AG04450 (cell line): ENCODE measurements at regions of chr5 and their contacts with region 1.

Region 1: DNA sequence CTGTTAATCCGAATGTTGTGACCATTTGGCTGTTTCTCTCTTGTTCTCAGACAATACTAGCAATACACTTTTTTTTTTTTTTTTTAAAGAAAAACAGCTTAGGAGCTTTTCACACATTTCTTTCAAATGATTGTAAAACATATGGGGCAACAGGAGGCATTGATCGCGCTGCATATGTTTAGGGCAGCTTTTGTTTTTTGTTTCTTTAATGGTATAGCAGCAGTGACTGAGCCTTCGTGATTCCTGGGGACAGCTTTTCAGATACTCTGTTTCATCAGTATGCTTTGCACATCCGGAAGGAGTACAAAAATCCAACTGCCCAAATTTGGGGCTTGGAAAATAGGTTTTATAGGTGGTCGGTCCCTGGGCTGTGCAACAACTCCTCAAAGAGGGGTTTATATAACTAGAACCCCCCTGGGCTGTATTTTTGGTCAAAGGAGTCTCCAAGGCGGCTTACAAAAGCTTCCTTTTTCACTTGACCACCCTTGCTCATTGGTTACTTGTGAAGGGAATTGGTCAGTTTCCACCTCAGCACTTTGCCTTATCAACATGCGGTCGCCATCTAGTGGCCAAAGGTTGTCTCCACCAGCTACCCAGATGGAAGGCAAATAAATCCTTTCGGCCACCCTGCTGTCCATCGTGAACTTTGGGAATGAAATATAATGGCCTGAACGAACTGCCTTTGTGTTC is 91.8 kb downstream of the PDE6A start:
- DNase-seq: peak; percentile 46
- H3K4me3 ChIP-seq: no peak overlapping the region
- H3K27ac ChIP-seq: no peak overlapping the region
- H3K27me3 ChIP-seq: peaks cover 19% of the 10 kb centered on the region
- CTCF ChIP-seq: peak; percentile 95

Region 2: DNA sequence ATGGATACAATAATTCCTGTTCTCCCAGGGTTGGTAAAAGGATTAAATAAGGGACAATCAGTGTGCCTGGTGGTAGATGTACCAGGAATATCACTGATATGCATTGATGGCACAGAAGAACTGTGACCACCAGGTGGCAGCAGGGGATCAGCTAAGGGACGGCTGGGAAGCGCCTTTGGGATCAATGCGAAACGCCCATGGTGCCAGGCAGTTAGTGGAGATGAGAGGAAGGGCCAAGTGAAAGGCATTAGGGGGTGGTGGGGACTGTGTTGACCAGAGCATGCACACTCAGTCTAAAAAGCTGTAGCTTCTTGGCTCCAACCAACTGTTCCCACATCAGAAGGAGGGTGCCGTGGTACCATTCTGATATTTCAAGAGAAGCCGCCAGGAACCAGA is 215.9 kb before region 1 on chr5:
- CTCF ChIA-PET with region 1: interaction called, 18 read pairs
- POLR2A ChIA-PET with region 1: no interaction called
- DNase-seq: peak; percentile 48
- H3K4me3 ChIP-seq: no peak overlapping the region
- H3K27ac ChIP-seq: no peak overlapping the region
- H3K27me3 ChIP-seq: no peaks in the 10 kb centered on the region
- CTCF ChIP-seq: peak; percentile 86

Region 3: GRCh38 chr5:149872351-149873040 is 19.7 kb after region 1 on chr5:
- CTCF ChIA-PET with region 1: interaction called, 66 read pairs
- POLR2A ChIA-PET with region 1: no interaction called
- DNase-seq: no peak
- H3K4me3 ChIP-seq: no peak overlapping the region
- H3K27ac ChIP-seq: no peak overlapping the region
- H3K27me3 ChIP-seq: peaks cover 41% of the 10 kb centered on the region
- CTCF ChIP-seq: no peak

Region 4: DNA sequence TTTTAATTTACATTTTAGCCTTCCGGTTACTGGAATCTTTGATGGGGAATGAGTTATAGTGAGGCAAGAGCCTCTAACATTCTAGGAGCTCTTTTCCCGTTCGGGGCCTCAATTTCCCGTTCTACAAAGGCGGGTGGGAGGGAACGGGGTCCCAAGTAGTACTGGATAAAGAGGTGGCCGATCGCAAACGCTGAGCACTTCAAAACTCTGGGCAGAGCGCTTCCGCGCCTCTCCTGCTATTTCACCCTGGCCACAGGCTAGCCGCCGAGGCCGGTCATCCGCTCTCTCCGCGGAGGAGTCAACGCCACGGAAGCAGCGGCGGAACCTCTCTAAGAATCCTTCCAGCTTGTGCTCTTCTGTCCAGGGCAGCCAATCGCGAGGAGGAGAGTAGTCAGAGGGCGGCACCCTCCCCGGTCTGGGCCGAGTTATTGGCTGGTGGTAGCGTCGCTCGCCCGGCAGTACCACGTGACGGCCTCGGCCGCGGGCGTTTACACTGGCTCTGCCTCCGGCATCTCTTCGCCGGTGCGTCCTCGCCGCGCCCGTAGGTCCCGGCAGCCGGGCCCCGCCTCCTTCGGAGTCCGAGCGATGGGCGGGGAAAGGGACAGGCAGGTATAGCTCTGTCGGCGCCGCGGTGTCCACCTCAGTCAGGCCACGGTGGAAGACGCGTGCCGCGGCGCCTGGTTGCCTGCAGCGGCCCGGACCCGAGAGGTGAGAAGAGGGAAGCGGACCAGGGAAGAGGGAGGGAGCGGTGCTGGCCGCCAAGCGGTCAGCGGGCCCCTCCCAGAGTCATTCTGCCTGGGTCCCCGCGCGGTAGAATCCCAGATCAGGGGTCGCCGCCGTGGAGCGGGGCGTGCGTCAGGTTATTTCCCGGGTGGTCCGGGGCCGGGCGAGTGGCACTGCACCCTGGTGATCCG is 107.7 kb after region 1 on chr5 and contains the start of gene SLC26A2:
- CTCF ChIA-PET with region 1: interaction called, 131 read pairs
- POLR2A ChIA-PET with region 1: interaction called, 3 read pairs
- DNase-seq: peak; percentile 93
- H3K4me3 ChIP-seq: peak within 1 kb of the TSS; percentile 75
- H3K27ac ChIP-seq: peak within 1 kb of the TSS; percentile 90
- H3K27me3 ChIP-seq: no peaks in the 10 kb centered on the region
- CTCF ChIP-seq: no peak
- polyA plus RNA-seq, gene SLC26A2: 6.6 and 9.7 TPM in 2 replicates

Region 5: DNA sequence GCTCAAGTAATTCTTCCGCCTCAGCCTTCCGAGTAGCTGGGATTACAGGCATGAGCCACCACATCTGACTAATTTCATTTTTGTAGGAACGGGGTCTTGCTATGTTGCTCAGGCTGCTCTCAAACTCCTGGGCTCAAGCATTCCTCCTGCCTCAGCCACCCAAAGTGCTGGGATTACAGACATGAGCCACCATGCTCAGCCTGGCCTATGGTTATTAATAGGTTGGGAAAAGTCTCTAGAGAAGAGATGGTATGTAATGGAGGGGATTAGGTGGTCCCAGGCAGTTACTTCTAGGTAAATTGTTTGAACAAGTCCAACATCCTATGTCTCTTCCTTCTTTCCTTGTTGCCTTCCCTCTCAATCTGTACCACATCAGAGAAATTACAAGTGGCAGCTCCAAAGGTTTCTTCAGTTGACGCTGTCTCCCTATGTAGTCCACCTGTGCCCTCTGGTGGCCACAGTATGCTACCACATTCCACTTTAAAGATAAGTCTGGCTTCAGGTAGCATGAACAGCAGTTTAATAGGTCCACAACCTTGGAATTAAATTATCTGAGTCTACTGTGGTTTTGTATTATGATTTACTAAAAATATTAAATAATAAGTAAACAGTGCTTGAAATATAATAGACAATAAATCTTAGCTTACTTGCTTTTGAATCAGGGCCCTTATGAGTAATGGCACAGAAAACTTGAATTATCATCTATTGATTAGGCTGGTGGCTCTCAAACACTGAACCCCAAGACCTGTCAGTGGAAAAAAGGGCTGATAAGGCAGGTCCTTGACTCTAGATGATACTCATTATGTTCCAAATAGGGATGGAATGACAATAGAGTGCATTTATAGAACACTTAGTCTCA is 138.0 kb after region 1 on chr5:
- CTCF ChIA-PET with region 1: interaction called, 22 read pairs
- POLR2A ChIA-PET with region 1: no interaction called
- DNase-seq: peak; percentile 56
- H3K4me3 ChIP-seq: no peak overlapping the region
- H3K27ac ChIP-seq: no peak overlapping the region
- H3K27me3 ChIP-seq: no peaks in the 10 kb centered on the region
- CTCF ChIP-seq: peak; percentile 98

Region 6: DNA sequence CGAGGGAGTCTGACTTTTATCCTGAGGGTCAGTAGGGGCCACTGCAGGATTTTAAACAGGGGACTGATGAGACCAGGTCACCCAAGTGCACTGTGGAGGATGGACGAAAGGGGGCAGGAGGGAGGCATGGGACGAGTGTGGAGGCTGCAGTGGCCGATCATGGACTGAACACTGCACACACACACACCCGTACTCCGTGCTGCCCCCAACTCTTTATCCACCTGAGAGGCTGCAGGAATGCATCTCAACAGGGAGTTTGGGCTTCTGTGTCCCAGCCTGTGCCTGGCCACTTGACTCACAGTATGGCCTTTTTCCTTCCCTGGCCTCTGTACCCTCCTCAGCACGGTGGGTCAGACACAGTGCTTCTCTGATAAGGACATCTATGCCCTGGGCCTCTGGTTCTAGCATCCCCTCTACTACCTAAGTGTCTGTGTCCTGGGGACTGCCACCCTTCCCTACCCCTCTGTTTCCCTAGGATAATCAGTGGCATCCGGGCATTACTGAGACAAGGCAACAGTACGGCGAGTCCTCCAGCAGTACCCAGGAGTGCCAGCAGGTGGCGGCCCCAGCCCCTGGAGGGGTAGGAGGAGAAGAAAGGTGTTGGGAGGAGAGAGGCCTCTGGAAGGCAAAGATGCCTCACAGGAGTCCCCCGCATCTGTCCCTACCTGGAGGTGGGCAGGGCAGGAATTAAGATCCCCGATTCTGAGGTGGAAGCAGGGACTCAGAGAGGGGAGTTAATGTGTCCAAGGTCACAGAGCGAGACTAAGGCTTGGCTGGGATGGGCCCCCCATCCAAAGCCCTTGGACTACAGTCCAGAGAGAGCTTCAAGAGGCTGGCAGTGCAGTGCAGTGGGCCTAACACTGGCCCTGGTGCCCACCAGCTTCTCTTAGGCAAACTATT is 308.7 kb after region 1 on chr5:
- CTCF ChIA-PET with region 1: no interaction called
- POLR2A ChIA-PET with region 1: no interaction called
- DNase-seq: no peak
- H3K4me3 ChIP-seq: no peak overlapping the region
- H3K27ac ChIP-seq: no peak overlapping the region
- H3K27me3 ChIP-seq: no peaks in the 10 kb centered on the region
- CTCF ChIP-seq: peak; percentile 99